MCF 10A (cell line): ENCODE measurements at regions of chr1 and their contacts with region 1.

Region 1: DNA sequence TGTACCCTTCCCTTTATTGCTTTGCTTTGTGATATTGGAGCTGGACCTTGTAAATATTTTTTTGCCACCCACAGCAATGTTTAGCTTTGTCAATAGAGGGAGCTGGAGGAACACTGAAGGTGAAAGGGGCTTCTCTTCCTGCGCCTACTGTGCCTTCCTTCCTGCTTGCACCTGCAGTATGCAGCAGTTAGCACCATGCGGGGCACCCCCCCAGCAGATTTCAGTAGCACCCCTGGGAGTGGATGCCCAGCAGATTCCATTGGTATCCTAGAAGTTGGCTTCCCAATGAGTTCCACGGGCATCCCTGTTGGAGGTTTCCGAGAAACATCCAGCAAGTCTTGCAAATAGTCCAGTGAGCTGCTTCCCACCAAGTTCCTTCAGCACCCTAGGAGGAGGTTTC is 25.6 kb downstream of the S100A10 start:
- DNase-seq: peak; percentile 86
- H3K4me3 Mint-ChIP-seq: no peak overlapping the region
- H3K27ac Mint-ChIP-seq: no peak overlapping the region
- H3K4me1 Mint-ChIP-seq: peaks cover 34% of the 10 kb centered on the region
- H3K27me3 Mint-ChIP-seq: no peaks in the 10 kb centered on the region
- CTCF ChIP-seq: peak; percentile 91

Region 2: GRCh38 chr1:151710187-151710840 is 257.7 kb before region 1 on chr1:
- CTCF ChIA-PET with region 1: no interaction called
- POLR2A ChIA-PET with region 1: no interaction called
- intact Hi-C with region 1: no loop called
- DNase-seq: peak; percentile 21
- H3K4me3 Mint-ChIP-seq: no peak overlapping the region
- H3K27ac Mint-ChIP-seq: no peak overlapping the region
- H3K4me1 Mint-ChIP-seq: peaks cover 15% of the 10 kb centered on the region
- H3K27me3 Mint-ChIP-seq: peaks cover 7% of the 10 kb centered on the region
- CTCF ChIP-seq: no peak

Region 3: DNA sequence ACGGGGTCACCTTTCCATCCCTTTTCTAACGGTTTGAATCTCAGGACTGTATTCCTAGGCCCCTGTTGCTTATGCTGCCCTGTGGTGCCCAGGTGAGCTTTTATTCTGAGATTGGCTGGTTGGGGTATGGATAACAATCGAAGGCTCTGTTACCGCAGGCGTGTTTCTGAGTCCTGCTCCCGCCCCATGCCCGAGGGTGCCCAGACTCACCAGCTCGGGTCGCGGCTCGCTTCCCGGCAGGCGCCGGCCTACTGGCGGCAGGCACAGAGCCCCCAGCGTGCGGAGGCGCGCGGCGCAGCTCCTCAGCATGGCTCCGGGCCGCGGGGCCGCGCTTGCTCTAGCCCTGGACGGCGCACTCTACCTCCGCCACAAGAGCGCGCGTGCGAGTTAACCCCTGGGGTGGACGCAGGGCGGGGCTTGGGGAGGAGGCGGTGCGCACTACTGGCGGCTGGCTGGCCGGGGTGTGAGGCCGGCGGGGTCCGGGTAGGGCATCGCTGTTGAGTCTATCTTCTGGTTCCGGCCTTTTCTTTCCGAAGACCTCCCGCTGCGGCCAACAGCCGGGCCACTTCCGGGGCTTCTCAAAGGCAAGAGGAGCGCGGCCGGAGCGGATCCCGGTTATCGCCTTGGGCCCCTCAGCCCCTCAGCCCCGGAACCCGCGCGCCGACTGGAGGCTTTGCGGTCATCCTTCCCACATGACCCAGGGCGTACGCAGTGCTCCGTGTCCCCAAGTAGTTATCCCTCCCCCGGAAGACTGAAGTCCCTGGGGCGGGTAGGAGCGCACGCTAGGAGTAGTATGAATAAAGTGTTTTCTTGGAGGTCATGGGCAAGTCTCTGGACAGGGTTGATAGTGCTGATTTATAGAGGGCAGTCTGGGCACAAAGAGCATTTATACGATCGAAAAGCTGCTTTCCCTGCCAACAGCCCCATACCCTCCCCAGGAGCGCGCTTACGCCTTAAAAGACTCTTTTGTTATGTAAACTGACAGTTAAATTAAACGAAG is 58.6 kb before region 1 on chr1 and contains the start of gene THEM4:
- CTCF ChIA-PET with region 1: interaction called, 10 read pairs
- POLR2A ChIA-PET with region 1: interaction called, 7 read pairs
- intact Hi-C with region 1: loop called (anchors 1 kb)
- DNase-seq: peak; percentile 99
- H3K4me3 Mint-ChIP-seq: peak within 1 kb of the TSS; percentile 99
- H3K27ac Mint-ChIP-seq: peak within 1 kb of the TSS; percentile 99
- H3K4me1 Mint-ChIP-seq: peaks cover 17% of the 10 kb centered on the region
- H3K27me3 Mint-ChIP-seq: no peaks in the 10 kb centered on the region
- CTCF ChIP-seq: peak; percentile 25
- total RNA-seq, gene THEM4: 27.5 and 29.1 TPM in 2 replicates

Region 4: DNA sequence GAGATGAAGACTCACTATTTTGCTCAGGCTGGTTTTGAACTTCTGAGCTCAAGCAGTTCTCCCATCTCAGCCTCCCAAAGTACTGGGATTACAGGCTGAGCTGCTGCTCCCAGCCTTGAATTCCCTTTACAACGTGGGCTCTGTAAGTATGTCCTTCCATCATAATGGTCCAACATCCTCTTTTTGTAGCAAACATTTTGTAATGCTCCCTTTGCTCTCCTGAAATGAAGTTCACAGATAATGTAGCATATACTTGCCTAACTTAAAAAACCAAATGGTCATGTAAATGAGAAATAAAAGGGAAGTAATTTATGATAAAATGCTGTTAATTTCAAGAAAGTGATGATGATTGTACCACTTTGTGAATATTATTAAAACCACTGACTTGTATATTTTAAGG is 28.3 kb before region 1 on chr1:
- CTCF ChIA-PET with region 1: interaction called, 116 read pairs
- POLR2A ChIA-PET with region 1: interaction called, 87 read pairs
- intact Hi-C with region 1: loop called (anchors 1 kb)
- DNase-seq: no peak
- H3K4me3 Mint-ChIP-seq: no peak overlapping the region
- H3K27ac Mint-ChIP-seq: no peak overlapping the region
- H3K4me1 Mint-ChIP-seq: peaks cover 13% of the 10 kb centered on the region
- H3K27me3 Mint-ChIP-seq: no peaks in the 10 kb centered on the region
- CTCF ChIP-seq: no peak

Region 5: GRCh38 chr1:151953409-151954094 is 14.5 kb before region 1 on chr1:
- CTCF ChIA-PET with region 1: interaction called, 20 read pairs
- POLR2A ChIA-PET with region 1: interaction called, 6 read pairs
- intact Hi-C with region 1: no loop called
- DNase-seq: no peak
- H3K4me3 Mint-ChIP-seq: no peak overlapping the region
- H3K27ac Mint-ChIP-seq: no peak overlapping the region
- H3K4me1 Mint-ChIP-seq: peaks cover 6% of the 10 kb centered on the region
- H3K27me3 Mint-ChIP-seq: no peaks in the 10 kb centered on the region
- CTCF ChIP-seq: no peak

Region 6: DNA sequence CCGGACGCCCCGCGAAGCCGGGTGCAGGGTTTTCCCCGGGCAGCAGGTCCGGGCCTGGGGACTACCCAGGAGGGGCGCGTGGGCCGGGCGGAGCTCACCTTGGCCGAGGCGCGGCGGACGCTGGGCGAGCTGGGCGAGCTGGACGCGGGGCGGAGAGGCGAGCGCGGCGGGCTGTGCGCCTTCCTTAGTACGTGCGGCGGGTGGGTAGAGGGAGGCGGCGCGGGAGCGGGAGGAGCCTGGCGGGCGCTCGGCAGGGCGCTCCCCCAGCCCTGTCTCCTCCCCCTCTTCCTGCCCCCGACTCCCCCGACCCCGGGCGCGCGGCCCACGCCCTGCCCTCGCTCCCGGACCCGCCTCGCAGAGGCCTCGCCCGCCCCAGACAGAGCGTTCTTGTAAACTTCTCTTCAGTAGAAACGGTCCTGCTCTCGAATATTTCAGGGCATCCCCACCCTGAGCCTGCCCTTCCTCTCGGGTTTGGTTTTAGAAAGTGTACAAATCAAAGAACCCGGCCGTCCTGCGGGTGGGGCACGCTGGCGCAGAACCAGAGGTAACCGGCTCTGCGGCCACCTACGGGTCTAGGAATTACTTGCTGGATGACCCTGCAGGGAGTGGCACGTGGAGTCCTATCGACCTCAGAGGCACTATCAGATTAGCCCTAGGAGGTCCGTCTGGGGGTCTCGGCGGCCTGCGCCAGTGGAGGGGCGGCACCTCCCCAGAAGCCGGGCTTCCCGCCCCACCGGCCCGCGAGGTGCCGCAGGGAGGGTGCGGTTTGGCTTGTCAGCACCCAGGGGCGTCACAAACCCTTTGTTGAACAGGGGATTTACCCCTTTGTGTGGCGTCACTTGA is 25.8 kb after region 1 on chr1 and contains the start of gene S100A10:
- CTCF ChIA-PET with region 1: interaction called, 543 read pairs
- POLR2A ChIA-PET with region 1: interaction called, 1,089 read pairs
- intact Hi-C with region 1: loop called (anchors 1 kb)
- DNase-seq: peak; percentile 86
- H3K4me3 Mint-ChIP-seq: peak within 1 kb of the TSS; percentile 89
- H3K27ac Mint-ChIP-seq: peak within 1 kb of the TSS; percentile 96
- H3K4me1 Mint-ChIP-seq: peaks cover 54% of the 10 kb centered on the region
- H3K27me3 Mint-ChIP-seq: no peaks in the 10 kb centered on the region
- CTCF ChIP-seq: no peak
- total RNA-seq, gene S100A10: 1,693 and 1,694 TPM in 2 replicates

Region 7: GRCh38 chr1:152013664-152014237 is 45.7 kb after region 1 on chr1:
- CTCF ChIA-PET with region 1: interaction called, 58 read pairs
- POLR2A ChIA-PET with region 1: no interaction called
- intact Hi-C with region 1: loop called (anchors 1 kb)
- DNase-seq: peak; percentile 76
- H3K4me3 Mint-ChIP-seq: no peak overlapping the region
- H3K27ac Mint-ChIP-seq: no peak overlapping the region
- H3K4me1 Mint-ChIP-seq: peaks cover 12% of the 10 kb centered on the region
- H3K27me3 Mint-ChIP-seq: no peaks in the 10 kb centered on the region
- CTCF ChIP-seq: peak; percentile 75

Region 8: DNA sequence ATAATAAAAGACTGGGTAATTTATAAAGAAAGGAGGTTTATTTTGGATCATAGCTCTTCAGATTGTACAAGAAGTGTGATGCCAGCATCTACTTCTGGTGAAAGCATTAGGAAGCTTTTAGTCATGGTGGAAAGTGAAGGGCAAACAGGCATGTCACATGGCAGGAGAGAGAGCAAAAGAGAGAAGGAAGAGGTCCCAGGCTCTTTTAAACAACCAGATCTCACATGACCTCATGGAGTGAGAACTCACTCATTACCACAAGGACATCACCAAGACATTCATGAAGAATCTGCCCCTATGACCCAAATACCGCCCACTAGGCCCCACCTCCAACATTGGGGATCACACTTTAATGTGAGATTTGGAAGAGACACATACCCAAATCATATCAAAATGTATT is 180.9 kb after region 1 on chr1:
- CTCF ChIA-PET with region 1: no interaction called
- POLR2A ChIA-PET with region 1: no interaction called
- intact Hi-C with region 1: no loop called
- DNase-seq: no peak
- H3K4me3 Mint-ChIP-seq: no peak overlapping the region
- H3K27ac Mint-ChIP-seq: no peak overlapping the region
- H3K4me1 Mint-ChIP-seq: no peaks in the 10 kb centered on the region
- H3K27me3 Mint-ChIP-seq: no peaks in the 10 kb centered on the region
- CTCF ChIP-seq: no peak